Uterus (tissue), 4 donors: ENCODE measurements at regions of chr17 and their contacts with region 1.

Region 1: GRCh38 chr17:38982858-38983746 is 15.9 kb upstream of the FBXO47 start:
- DNase-seq: peak; percentile 50 to 68
- H3K4me3 ChIP-seq: no peak overlapping the region
- H3K27ac ChIP-seq: peak overlapping the region; percentile 55 to 60
- H3K4me1 ChIP-seq: no peaks in the 10 kb centered on the region
- H3K27me3 ChIP-seq: no peaks in the 10 kb centered on the region
- CTCF ChIP-seq: peak; percentile 73 to 91 (median 86)
- POLR2A ChIP-seq: no peak

Region 2: GRCh38 chr17:39153599-39154051 is 170.5 kb after region 1 on chr17:
- intact Hi-C with region 1: loop called (anchors 2 kb)
- DNase-seq: peak; percentile 93 to 95
- H3K4me3 ChIP-seq: peak overlapping the region; percentile 87 to 92
- H3K27ac ChIP-seq: peak overlapping the region; percentile 96 to 99
- H3K4me1 ChIP-seq: no peaks in the 10 kb centered on the region
- H3K27me3 ChIP-seq: no peaks in the 10 kb centered on the region
- CTCF ChIP-seq: peak in 3 of 4 experiments; percentile 12 to 38 (median 25)
- POLR2A ChIP-seq: peak; percentile 33 to 54

Region 3: GRCh38 chr17:39244600-39245570 is 261.8 kb after region 1 on chr17:
- intact Hi-C with region 1: loop called (anchors 10 kb)
- DNase-seq: peak; percentile 85 to 88
- H3K4me3 ChIP-seq: no peak overlapping the region
- H3K27ac ChIP-seq: no peak overlapping the region
- H3K4me1 ChIP-seq: no peaks in the 10 kb centered on the region
- H3K27me3 ChIP-seq: no peaks in the 10 kb centered on the region
- CTCF ChIP-seq: peak; percentile 91 to 93 (median 92)
- POLR2A ChIP-seq: no peak